ENCODE measurements at regions of chr12 and their contacts with region 1.

Region 1: DNA sequence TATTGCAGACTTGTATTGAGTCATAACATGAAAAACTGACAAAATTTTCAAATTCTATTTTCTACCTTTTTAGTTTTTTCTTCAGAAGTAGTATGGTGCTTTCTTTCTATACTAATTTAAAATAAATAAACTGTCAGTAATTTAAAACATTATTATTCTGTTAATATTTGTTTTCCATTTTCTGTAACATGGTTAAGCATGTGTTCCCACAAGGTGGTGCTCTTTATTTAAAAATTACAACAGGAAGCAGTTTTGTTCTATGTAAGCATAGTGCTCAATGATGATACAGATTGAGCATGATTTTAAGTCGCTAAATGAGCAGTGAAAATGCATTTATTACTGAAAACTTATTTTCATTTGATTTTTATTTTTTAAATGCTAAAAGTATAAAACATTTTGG is 114.6 kb downstream of the PPFIA2 start:
- DNase-seq: no peak
- ATAC-seq: peak in 1 of 2 donors; percentile 47

Region 2: DNA sequence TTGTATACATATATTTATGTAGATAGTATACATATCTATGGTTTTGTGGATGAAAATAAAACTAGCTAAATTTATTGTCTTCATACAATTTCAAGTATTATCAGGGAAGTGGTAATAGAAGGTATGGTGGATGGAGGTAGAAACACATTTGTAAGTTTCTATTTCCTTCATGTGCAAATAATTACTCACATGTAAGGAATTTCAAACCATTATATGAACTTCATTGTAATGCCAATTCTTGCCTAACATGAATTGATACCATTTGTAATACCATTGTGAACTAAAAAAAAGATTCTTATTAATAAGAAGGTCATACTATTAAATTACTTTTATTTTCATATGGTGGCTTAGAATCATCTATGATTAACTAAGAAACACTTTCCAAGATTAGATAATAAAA is 134.7 kb after region 1 on chr12:
- intact Hi-C with region 1: no loop called
- DNase-seq: no peak
- ATAC-seq: no peak

Region 3: DNA sequence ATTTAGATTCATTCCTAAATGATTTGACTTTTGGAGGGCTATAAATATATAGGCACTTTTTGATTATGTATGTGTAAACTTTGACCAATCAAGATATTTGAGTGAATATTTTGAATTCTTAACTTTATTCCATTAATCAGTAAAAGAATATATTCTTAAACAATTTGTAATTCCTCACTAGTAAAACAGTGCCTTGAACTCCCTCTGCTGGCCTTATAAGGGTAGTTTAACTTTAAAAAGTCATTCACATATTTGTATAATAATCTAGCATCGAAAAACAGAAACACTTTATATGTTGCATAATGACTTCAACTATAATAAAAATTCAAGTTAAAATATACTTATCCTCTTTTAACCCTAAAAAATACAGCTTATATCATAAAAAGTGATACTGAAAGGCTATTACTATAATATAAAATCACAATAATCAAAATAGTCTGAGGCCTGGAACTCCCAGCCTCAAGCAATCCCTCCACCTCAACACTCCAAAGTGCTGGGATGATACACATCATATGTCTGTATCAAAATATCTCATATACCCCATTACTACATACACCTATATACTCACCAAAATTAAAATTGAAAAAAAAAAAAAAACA is 682.5 kb after region 1 on chr12:
- intact Hi-C with region 1: loop called (anchors 2 to 10 kb)
- DNase-seq: no peak
- ATAC-seq: no peak

Measured in left cardiac atrium (tissue), 4 donors.